Activated CD4-positive, alpha-beta T cell treated with anti-CD3 and anti-CD28 coated beads for 36 hours (primary cell): ENCODE measurements at regions of chr4 and their contacts with region 1.

Region 1: DNA sequence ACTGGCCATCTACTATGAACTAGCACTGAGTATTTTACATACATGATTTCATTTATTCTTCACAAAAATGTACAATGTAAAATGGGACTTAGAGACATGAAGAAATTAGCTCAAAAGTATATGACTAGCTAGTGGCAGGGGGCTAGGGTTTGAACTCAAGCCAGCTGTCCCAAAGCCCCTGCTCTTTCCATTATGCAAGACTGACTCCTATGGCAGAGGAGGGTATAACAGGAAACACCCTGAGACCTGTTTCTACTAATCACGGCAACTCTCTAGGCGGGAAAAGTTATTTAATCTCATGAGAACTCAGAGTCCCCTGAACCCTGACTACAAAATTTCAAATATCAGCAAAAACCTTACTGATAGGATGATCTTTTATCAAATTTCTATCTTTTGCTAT is 150.6 kb downstream of the PRDM5 start:
- DNase-seq: no peak
- ATAC-seq: no peak
- H3K4me3 Mint-ChIP-seq: no peak overlapping the region
- H3K27ac Mint-ChIP-seq: no peak overlapping the region
- H3K4me1 Mint-ChIP-seq: no peaks in the 10 kb centered on the region
- H3K27me3 Mint-ChIP-seq: no peaks in the 10 kb centered on the region

Region 2: DNA sequence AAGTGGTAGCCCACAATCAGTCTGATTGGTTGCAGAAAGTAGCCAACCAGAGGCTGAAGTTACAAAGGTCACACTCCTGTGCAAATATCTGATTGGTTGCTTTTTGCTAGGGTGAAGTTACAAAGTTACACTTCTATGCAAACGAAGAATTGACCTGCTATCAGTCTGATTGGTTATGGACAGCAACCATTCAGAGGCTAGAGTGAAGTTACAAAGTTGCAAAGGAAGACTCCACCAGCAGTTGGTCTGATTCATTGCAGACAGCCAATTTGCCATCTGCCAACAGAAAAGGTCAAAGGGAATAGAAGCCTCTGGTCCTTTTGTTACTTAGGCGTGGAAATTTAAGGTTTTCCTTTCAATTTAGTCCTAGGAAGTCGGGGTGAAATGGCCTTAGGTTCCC is 227.1 kb before region 1 on chr4:
- CTCF ChIA-PET with region 1: no interaction called
- POLR2A ChIA-PET with region 1: no interaction called
- intact Hi-C with region 1: no loop called
- DNase-seq: no peak
- ATAC-seq: no peak
- H3K4me3 Mint-ChIP-seq: no peak overlapping the region
- H3K27ac Mint-ChIP-seq: no peak overlapping the region
- H3K4me1 Mint-ChIP-seq: no peaks in the 10 kb centered on the region
- H3K27me3 Mint-ChIP-seq: no peaks in the 10 kb centered on the region

Region 3: GRCh38 chr4:120753854-120754253 is 18.1 kb before region 1 on chr4:
- CTCF ChIA-PET with region 1: interaction called, 3 read pairs
- POLR2A ChIA-PET with region 1: no interaction called
- intact Hi-C with region 1: loop called in 1 of 2 experiments (anchors 1 kb)
- DNase-seq: no peak
- ATAC-seq: no peak
- H3K4me3 Mint-ChIP-seq: no peak overlapping the region
- H3K27ac Mint-ChIP-seq: no peak overlapping the region
- H3K4me1 Mint-ChIP-seq: no peaks in the 10 kb centered on the region
- H3K27me3 Mint-ChIP-seq: no peaks in the 10 kb centered on the region